ENCODE measurements at regions of chr22 and their contacts with region 1.

Region 1: DNA sequence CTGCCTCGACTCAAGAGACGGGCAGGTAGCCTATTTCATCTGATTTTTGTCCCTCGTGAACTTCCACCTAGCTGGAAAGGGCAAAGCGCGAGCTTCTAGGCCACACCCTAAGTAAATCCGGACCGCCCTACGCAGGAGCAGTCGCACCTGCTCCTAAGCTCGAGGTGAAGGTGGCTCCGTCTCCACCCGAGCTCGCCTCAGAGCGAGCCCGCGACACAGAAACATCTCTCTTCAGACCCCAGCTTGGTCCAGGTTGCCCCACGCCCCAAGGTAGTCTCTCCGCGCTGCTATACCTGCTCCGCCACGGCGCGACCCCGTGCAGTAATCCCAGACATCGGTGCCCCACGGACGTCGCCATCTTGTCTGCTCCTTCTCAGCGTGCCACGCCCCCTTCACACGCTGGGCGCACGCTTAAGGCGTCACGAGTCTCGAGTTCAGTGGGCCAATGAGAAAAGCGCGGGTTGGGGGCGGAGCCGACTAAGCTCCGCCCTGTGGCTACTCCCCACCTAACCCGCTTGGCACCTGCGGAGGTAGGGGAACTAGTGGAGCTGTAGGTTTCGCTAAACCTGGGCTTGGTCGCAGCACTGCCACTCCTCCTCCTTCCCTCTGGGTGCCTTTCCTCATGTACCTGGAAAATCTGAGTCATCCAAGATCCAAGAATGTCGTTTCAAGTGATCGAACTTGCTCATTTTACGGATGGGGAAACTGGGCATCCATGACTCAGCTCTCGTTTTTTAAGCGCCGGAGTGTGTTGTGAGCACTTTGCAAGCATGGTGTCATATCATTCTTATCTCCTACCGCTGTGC is at the start of gene PISD:
- DNase-seq: peak; percentile 98
- H3K4me3 ChIP-seq: peak within 1 kb of the TSS; percentile 65 to 96 (median 88)
- H3K27ac ChIP-seq: peak within 1 kb of the TSS; percentile 100
- H3K4me1 ChIP-seq: peaks cover 31% of the 10 kb centered on the region
- H3K27me3 ChIP-seq: no peaks in the 10 kb centered on the region
- CTCF ChIP-seq: no peak
- total RNA-seq, gene PISD: 53.7 to 67.8 TPM

Region 2: GRCh38 chr22:31630331-31631329 is 31.4 kb before region 1 on chr22:
- CTCF ChIA-PET with region 1: no interaction called
- dilution Hi-C with region 1: no loop called
- in situ Hi-C with region 1: no loop called
- intact Hi-C with region 1: loop called (anchors 1 kb)
- DNase-seq: peak; percentile 71
- H3K4me3 ChIP-seq: peak overlapping the region; percentile 57 to 79 (median 64)
- H3K27ac ChIP-seq: peak overlapping the region; percentile 66
- H3K4me1 ChIP-seq: peaks cover 13% of the 10 kb centered on the region
- H3K27me3 ChIP-seq: no peaks in the 10 kb centered on the region
- CTCF ChIP-seq: peak in 1 of 2 donors; percentile 18

Region 3: DNA sequence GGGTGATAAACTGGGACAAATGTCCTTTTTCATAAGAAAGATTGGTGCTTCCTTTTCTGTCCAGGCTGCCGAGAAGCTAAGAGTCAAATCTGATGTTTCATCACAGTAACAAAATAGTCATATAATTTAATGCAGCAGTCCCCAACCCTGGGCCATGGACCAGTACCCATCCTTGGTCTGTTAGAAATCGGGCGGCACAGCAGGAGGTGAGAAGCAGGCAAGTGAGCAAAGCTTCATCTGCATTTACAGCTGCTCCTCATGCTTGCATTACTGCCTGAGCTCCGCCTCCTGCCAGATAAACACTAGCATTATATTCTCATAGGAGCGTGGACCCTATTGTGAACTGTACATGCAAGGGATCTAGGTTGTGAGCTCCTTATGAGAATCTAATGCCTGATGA is 61.7 kb after region 1 on chr22:
- CTCF ChIA-PET with region 1: no interaction called
- dilution Hi-C with region 1: loop called (anchors 5 kb)
- in situ Hi-C with region 1: no loop called
- intact Hi-C with region 1: no loop called
- DNase-seq: no peak
- H3K4me3 ChIP-seq: no peak overlapping the region
- H3K27ac ChIP-seq: no peak overlapping the region
- H3K4me1 ChIP-seq: no peaks in the 10 kb centered on the region
- H3K27me3 ChIP-seq: no peaks in the 10 kb centered on the region
- CTCF ChIP-seq: no peak

Region 4: GRCh38 chr22:31802575-31802974 is 140.5 kb after region 1 on chr22:
- CTCF ChIA-PET with region 1: no interaction called
- dilution Hi-C with region 1: no loop called
- in situ Hi-C with region 1: no loop called
- intact Hi-C with region 1: no loop called
- DNase-seq: no peak
- H3K4me3 ChIP-seq: no peak overlapping the region
- H3K27ac ChIP-seq: no peak overlapping the region
- H3K4me1 ChIP-seq: peaks cover 4% of the 10 kb centered on the region
- H3K27me3 ChIP-seq: no peaks in the 10 kb centered on the region
- CTCF ChIP-seq: no peak

Region 5: GRCh38 chr22:31818481-31819392 is 156.7 kb after region 1 on chr22:
- CTCF ChIA-PET with region 1: no interaction called
- dilution Hi-C with region 1: loop called (anchors 5 kb)
- in situ Hi-C with region 1: no loop called
- intact Hi-C with region 1: no loop called
- DNase-seq: peak; percentile 63
- H3K4me3 ChIP-seq: no peak overlapping the region
- H3K27ac ChIP-seq: no peak overlapping the region
- H3K4me1 ChIP-seq: no peaks in the 10 kb centered on the region
- H3K27me3 ChIP-seq: no peaks in the 10 kb centered on the region
- CTCF ChIP-seq: no peak

Region 6: GRCh38 chr22:31952459-31952858 is 290.4 kb after region 1 on chr22:
- CTCF ChIA-PET with region 1: interaction called, 10 read pairs
- dilution Hi-C with region 1: no loop called
- in situ Hi-C with region 1: loop called in 1 of 2 experiments (anchors 10 kb)
- intact Hi-C with region 1: loop called (anchors 1 kb)
- DNase-seq: peak; percentile 79
- H3K4me3 ChIP-seq: no peak overlapping the region
- H3K27ac ChIP-seq: peak overlapping the region; percentile 2
- H3K4me1 ChIP-seq: peaks cover 34% of the 10 kb centered on the region
- H3K27me3 ChIP-seq: no peaks in the 10 kb centered on the region
- CTCF ChIP-seq: no peak

Region 7: GRCh38 chr22:31970490-31971444 is 308.7 kb after region 1 on chr22:
- CTCF ChIA-PET with region 1: interaction called, 9 read pairs
- dilution Hi-C with region 1: no loop called
- in situ Hi-C with region 1: loop called in 1 of 2 experiments (anchors 10 kb)
- intact Hi-C with region 1: loop called (anchors 1 kb)
- DNase-seq: peak; percentile 85
- H3K4me3 ChIP-seq: peak overlapping the region; percentile 45 to 60 (median 57)
- H3K27ac ChIP-seq: peak overlapping the region; percentile 17
- H3K4me1 ChIP-seq: peaks cover 5% of the 10 kb centered on the region
- H3K27me3 ChIP-seq: no peaks in the 10 kb centered on the region
- CTCF ChIP-seq: peak; percentile 70 to 99